HEK293T (cell line): ENCODE measurements at regions of chr5 and their contacts with region 1.

Region 1: GRCh38 chr5:139765409-139766217 is 30.0 kb upstream of the PSD2 start:
- DNase-seq: peak; percentile 83

Region 2: DNA sequence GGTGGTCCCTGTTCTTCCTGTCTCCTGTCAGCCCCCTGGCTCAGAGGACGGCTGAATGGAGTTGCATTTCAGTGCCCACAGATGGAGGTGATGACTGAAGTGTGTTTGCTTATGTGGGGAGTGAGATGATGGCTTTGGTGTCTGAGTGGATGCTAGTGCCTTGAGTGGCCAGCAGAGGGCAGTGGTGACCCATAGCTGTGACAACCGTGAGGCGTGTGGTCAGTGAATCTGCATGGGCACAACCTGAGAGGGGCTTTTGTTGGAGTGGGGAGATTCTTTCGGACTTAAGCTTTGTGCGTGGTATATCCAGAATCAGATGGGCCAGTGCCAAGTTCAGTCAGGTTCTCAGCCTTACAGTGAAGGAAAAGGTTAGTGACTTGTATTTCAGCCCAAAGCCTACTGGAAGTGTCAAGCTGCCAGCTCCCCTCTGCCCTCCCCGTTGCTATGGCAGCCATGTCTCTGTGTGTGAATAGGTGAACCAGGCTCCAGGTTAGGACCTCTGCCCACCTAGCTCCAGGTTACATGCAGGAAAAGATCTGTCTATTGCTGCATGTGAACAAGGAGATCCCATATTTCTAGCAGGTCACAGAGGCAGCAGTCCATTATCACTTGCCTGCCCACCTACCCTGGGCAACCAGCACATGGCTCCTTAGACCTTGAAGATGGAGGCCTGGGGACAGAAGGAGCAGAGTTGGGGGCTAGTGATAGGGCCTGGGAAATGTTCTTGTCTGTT is 132.2 kb before region 1 on chr5:
- CTCF ChIA-PET with region 1: interaction called, 25 read pairs
- POLR2A ChIA-PET with region 1: no interaction called
- DNase-seq: peak; percentile 85

Region 3: DNA sequence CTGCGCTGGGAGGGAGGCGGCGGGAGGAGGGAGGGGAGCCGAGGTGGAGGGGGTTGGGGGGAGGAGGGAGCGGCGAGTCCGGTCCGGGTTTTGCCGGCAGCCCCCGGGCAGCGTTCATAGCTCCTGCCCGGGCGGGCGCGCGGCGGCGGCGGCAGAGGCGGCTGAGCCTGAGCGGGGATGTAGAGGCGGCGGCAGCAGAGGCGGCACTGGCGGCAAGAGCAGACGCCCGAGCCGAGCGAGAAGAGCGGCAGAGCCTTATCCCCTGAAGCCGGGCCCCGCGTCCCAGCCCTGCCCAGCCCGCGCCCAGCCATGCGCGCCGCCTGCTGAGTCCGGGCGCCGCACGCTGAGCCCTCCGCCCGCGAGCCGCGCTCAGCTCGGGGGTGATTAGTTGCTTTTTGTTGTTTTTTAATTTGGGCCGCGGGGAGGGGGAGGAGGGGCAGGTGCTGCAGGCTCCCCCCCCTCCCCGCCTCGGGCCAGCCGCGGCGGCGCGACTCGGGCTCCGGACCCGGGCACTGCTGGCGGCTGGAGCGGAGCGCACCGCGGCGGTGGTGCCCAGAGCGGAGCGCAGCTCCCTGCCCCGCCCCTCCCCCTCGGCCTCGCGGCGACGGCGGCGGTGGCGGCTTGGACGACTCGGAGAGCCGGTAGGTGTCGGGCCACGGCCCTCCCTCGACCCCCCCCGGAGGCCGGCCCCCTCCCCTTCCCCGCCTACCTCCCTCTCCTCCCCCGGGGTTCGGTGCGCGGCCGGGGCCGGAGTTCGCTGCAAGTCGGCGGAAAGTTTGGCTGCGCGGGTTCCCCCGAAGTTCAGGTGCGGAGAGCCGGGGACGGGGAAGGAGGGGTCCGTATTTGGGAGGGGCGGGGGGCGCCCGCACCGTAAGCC is 117.2 kb before region 1 on chr5 and contains the start of gene CXXC5:
- CTCF ChIA-PET with region 1: interaction called, 15 read pairs
- POLR2A ChIA-PET with region 1: no interaction called
- DNase-seq: peak; percentile 83

Region 4: DNA sequence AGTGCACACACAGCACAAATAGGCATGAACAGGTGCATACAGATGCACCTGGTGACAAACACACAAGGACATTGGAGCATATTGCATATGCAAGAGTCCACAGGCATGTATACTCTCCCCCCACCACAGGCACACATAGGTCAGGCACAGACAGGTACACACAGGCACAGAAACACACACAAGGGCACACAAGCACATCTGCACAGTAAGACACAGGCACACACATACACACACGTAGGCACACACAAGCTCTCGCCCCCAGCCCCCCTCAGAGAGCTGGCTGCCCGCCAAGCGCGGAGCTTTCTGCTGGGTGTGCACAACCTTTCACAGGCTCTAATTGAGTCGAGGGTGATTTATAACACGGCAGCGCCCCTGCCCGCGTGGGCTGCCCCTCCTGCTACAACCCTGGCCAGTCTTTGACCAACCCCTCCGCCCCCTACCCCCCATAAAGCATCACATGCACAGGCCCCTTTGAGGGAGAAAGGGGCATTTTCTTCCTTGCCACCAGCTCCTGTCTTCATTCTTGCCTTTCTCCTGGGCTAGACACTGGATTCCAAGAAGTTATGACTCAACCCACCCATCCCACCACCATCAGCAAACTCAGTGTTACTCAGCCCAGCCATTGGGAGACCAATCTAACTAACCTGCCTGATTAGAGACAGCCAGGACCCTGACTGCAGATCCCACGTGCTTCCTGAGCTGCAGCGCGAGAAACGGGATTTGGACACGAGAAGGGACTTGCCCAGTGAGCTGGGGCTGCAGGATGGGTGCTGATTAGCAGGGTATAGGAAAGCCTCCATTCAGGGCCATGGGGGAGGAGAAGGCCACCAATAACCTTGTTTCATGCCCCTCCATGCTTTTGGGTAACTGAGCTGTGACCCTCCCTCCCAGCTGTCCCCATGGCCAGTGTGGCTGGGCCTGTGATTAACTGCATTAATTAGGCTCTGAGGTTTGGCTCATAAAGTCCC is 12.8 kb before region 1 on chr5:
- CTCF ChIA-PET with region 1: interaction called, 20 read pairs
- POLR2A ChIA-PET with region 1: no interaction called
- DNase-seq: no peak

Region 5: GRCh38 chr5:139808493-139809139 is 43.0 kb after region 1 on chr5:
- CTCF ChIA-PET with region 1: no interaction called
- POLR2A ChIA-PET with region 1: no interaction called
- DNase-seq: peak; percentile 48